Dorsolateral prefrontal cortex (tissue), 120 donors: ENCODE measurements at regions of chr11 and their contacts with region 1.

Region 1: GRCh38 chr11:78645226-78646202 is 70.8 kb upstream of the NARS2 start:
- DNase-seq: peak; percentile 57 to 87 (median 77)
- H3K4me3 ChIP-seq: peak overlapping the region in 25 of 59 donors; percentile 2 to 57 (median 33)
- H3K27ac ChIP-seq: peak overlapping the region in 1 of 59 donors; percentile 27
- H3K27me3 ChIP-seq: peaks cover 0 to 3% (median 0%) of the 10 kb centered on the region in 45 donors
- CTCF ChIP-seq: peak; percentile 79 to 99 (median 97)

Region 2: GRCh38 chr11:78379039-78379670 is 266.4 kb before region 1 on chr11:
- intact Hi-C with region 1: no loop called
- DNase-seq: no peak
- H3K4me3 ChIP-seq: no peak overlapping the region
- H3K27ac ChIP-seq: peak overlapping the region in 16 of 59 donors; percentile 3 to 63 (median 36)
- H3K27me3 ChIP-seq: no peaks in the 10 kb centered on the region
- CTCF ChIP-seq: no peak

Region 3: DNA sequence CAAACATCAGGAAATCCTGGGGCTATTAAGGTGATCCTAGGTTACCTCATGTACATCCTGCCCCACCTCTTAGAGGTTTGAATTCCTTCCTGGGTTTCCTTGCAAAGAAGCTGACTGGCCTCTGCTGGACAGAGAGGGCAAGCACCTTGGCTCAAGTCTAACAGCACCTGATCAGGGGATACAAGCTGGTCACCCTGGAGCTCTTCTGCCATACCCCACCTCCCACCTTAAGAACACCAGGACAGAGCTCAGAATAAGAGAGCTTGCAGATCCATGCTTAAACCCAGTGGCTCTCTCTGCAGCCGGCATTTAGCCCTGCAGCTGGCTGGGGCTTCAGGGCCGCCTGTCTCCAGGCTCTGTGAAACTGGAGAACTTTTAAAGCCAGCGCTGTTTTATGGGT is 315.7 kb after region 1 on chr11:
- intact Hi-C with region 1: loop called in 1 of 2 experiments (anchors 5 kb)
- DNase-seq: no peak
- H3K4me3 ChIP-seq: peak overlapping the region in 8 of 59 donors; percentile 43 to 67 (median 58)
- H3K27ac ChIP-seq: no peak overlapping the region
- H3K27me3 ChIP-seq: no peaks in the 10 kb centered on the region
- CTCF ChIP-seq: peak in 21 of 56 donors; percentile 9 to 38 (median 25)

Region 4: GRCh38 chr11:79076526-79077115 is 431.1 kb after region 1 on chr11:
- intact Hi-C with region 1: loop called in 1 of 2 experiments (anchors 10 kb)
- DNase-seq: peak in 3 of 10 donors; percentile 14 to 49 (median 45)
- H3K4me3 ChIP-seq: no peak overlapping the region
- H3K27ac ChIP-seq: no peak overlapping the region
- H3K27me3 ChIP-seq: no peaks in the 10 kb centered on the region
- CTCF ChIP-seq: peak in 55 of 56 donors; percentile 35 to 70 (median 55)

Region 5: GRCh38 chr11:79160791-79161403 is 515.4 kb after region 1 on chr11:
- intact Hi-C with region 1: loop called in 1 of 2 experiments (anchors 2 kb)
- DNase-seq: no peak
- H3K4me3 ChIP-seq: no peak overlapping the region
- H3K27ac ChIP-seq: no peak overlapping the region
- H3K27me3 ChIP-seq: no peaks in the 10 kb centered on the region
- CTCF ChIP-seq: peak in 44 of 56 donors; percentile 22 to 71 (median 44)

Region 6: GRCh38 chr11:79274636-79275331 is 629.3 kb after region 1 on chr11:
- intact Hi-C with region 1: no loop called
- DNase-seq: no peak
- H3K4me3 ChIP-seq: no peak overlapping the region
- H3K27ac ChIP-seq: no peak overlapping the region
- H3K27me3 ChIP-seq: peaks cover 0 to 7% (median 0%) of the 10 kb centered on the region in 45 donors
- CTCF ChIP-seq: no peak

Region 7: DNA sequence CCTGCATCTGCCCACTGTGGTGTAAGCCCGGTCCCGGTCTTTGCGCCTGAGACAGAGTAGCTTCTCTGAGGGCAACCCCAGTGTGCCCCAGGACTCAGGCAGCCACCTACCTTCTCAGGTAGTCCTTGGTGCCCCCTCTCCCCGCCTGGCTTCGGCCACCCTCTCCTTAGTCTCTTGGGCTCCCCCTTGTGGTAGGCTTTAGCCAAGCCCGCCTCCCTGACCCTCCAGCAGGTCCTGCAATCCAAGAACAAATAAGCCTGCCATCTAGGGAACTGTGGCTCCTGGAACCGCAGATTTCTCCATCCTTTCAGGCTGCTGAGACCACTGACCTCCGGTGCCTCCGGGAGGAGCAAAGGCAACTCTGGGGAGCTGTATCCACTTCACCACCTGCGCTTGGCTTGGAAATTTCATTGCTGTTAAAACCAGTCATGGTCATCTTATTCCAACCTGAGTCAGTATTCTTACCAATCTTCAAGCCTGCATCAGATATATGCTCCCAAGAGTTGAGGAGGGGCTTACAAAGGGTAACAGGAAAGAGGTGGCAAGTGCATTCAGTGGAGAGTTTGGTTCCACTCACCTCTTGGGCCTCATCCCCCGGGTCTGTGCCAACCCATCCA is 848.1 kb after region 1 on chr11:
- intact Hi-C with region 1: loop called in 1 of 2 experiments (anchors 5 kb)
- DNase-seq: peak in 9 of 10 donors; percentile 12 to 70 (median 51)
- H3K4me3 ChIP-seq: no peak overlapping the region
- H3K27ac ChIP-seq: no peak overlapping the region
- H3K27me3 ChIP-seq: peaks cover 0 to 4% (median 0%) of the 10 kb centered on the region in 45 donors
- CTCF ChIP-seq: peak; percentile 23 to 85 (median 75)